ENCODE measurements at regions of chr16 and their contacts with region 1.

Region 1: GRCh38 chr16:72832621-72833248 is 215.2 kb downstream of the ZFHX3 start:
- DNase-seq: peak; percentile 77

Region 2: DNA sequence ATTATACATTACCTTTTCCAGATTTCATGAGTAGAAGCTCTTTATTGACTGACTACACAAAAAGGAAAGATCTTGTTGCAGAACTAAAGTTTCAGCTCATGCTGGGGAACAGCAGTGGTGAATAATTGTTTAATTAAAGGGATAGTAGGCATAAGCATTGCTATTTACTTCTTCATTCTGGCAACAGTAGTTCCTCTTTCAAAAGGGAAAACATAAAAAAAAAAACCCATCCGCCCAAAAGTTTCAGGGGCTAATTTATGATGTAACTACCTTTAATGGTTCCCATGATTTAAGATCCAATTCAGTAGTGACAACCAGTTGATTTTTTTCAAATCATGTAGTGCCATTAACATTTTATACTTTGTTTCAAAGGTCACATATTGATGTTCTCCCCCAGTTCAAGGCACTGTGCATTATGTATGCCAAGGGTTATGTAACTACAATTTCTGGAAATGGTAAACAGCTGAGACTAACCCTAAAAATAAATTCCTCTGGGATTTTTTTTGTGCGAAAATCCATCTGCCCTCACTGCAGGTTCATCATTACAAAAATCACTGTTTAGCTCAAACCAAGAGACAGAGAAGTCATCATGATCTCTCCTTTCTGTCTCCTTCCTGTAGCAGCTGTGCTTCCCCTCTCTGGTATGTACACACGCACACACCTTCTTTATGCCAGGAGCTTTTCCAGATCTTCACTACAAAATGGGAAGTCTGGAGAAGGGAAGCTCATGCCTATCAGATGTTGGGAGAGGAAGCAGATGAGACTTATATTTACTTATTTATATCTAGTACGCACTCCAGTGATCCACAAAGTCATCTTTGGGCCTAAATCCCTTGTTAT is 1106.0 kb before region 1 on chr16:
- in situ Hi-C with region 1: no loop called
- DNase-seq: peak; percentile 45

Region 3: GRCh38 chr16:73196670-73197069 is 363.9 kb after region 1 on chr16:
- in situ Hi-C with region 1: loop called (anchors 25 kb)
- DNase-seq: peak; percentile 83